Aorta (tissue), 5 donors: ENCODE measurements at regions of chr5 and their contacts with region 1.

Region 1: DNA sequence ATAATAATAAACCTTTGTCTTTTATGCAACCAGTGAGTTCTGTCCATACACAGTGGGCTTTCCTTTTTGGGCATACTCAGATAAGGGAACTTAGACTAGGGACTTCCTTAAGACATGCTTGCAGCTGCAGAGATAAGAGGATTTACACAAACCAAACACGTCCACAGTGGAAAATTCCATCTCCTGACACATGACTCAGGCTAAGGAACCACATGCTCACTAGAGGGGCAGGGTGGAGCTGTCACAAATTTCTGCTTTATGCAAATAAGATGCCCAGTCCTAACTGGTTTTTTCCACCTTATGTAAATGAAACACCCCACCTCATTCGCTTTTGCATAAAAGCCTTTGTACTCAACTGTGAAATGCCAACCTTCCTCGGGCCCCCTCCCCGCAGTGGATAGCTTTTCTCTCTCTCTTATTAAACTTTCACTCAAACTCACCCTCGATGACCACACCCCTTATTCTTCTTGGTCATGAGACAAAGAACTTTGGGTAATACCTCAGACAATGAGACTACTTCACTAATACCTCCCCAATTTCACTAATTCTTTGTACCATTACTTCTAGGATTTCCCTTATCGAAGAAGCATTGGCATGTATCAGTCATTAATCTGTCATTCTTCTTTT is 170.3 kb upstream of the FTMT start:
- DNase-seq: no peak
- ATAC-seq: no peak
- H3K4me3 ChIP-seq: no peak overlapping the region
- H3K27ac ChIP-seq: no peak overlapping the region
- H3K4me1 ChIP-seq: no peaks in the 10 kb centered on the region
- H3K27me3 ChIP-seq: no peaks in the 10 kb centered on the region

Region 2: GRCh38 chr5:121218086-121218485 is 463.3 kb before region 1 on chr5:
- intact Hi-C with region 1: no loop called
- DNase-seq: no peak
- ATAC-seq: no peak
- H3K4me3 ChIP-seq: no peak overlapping the region
- H3K27ac ChIP-seq: no peak overlapping the region
- H3K4me1 ChIP-seq: no peaks in the 10 kb centered on the region
- H3K27me3 ChIP-seq: no peaks in the 10 kb centered on the region

Region 3: GRCh38 chr5:121630402-121630801 is 50.9 kb before region 1 on chr5:
- intact Hi-C with region 1: no loop called
- DNase-seq: no peak
- ATAC-seq: no peak
- H3K4me3 ChIP-seq: no peak overlapping the region
- H3K27ac ChIP-seq: no peak overlapping the region
- H3K4me1 ChIP-seq: no peaks in the 10 kb centered on the region
- H3K27me3 ChIP-seq: no peaks in the 10 kb centered on the region

Region 4: GRCh38 chr5:121725480-121725879 is 44.1 kb after region 1 on chr5:
- intact Hi-C with region 1: loop called in 1 of 2 experiments (anchors 5 kb)
- DNase-seq: no peak
- ATAC-seq: no peak
- H3K4me3 ChIP-seq: no peak overlapping the region
- H3K27ac ChIP-seq: no peak overlapping the region
- H3K4me1 ChIP-seq: no peaks in the 10 kb centered on the region
- H3K27me3 ChIP-seq: no peaks in the 10 kb centered on the region

Region 5: DNA sequence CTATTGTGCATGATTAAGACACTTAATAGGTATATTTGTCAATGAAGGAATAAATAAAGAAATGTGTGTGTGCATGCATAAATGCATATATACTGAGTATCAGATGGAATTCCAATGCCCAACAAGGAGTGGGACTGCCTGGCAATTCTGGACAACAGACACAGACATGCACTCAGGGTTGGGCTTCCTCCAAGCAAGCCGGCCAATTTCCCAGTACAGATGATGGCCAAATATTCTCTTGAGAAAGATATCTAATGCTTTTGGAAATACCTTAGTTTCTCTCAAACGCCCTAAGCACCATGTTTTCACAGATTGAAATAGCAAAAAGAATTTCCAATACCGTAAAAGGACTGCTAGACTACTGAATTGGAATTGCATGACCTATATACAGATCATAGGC is 181.5 kb after region 1 on chr5:
- intact Hi-C with region 1: no loop called
- DNase-seq: no peak
- ATAC-seq: no peak
- H3K4me3 ChIP-seq: no peak overlapping the region
- H3K27ac ChIP-seq: no peak overlapping the region
- H3K4me1 ChIP-seq: no peaks in the 10 kb centered on the region
- H3K27me3 ChIP-seq: no peaks in the 10 kb centered on the region